ENCODE measurements at regions of chr5 and their contacts with region 1.

Region 1: GRCh38 chr5:176447982-176448608 is at the start of gene FAF2:
- DNase-seq: peak; percentile 97
- H3K4me3 ChIP-seq: peak within 1 kb of the TSS; percentile 100
- H3K27ac ChIP-seq: peak within 1 kb of the TSS; percentile 92
- H3K27me3 ChIP-seq: no peaks in the 10 kb centered on the region
- CTCF ChIP-seq: peak; percentile 90
- polyA plus RNA-seq, gene FAF2: 57.1 and 68.7 TPM in 2 replicates

Region 2: GRCh38 chr5:176361437-176362232 is 86.5 kb before region 1 on chr5 and contains the start of gene KIAA1191:
- CTCF ChIA-PET with region 1: interaction called, 13 read pairs
- POLR2A ChIA-PET with region 1: no interaction called
- DNase-seq: peak; percentile 63
- H3K4me3 ChIP-seq: peak within 1 kb of the TSS; percentile 95
- H3K27ac ChIP-seq: peak within 1 kb of the TSS; percentile 39
- H3K27me3 ChIP-seq: no peaks in the 10 kb centered on the region
- CTCF ChIP-seq: peak; percentile 30; the same call in 1 of the 2 replicates
- polyA plus RNA-seq, gene KIAA1191: 98.3 and 113 TPM in 2 replicates

Region 3: GRCh38 chr5:176415952-176416924 is 31.9 kb before region 1 on chr5 and contains the start of gene CLTB:
- CTCF ChIA-PET with region 1: interaction called, 14 read pairs
- POLR2A ChIA-PET with region 1: interaction called, 9 read pairs
- DNase-seq: no peak
- H3K4me3 ChIP-seq: peak within 1 kb of the TSS; percentile 76
- H3K27ac ChIP-seq: peak within 1 kb of the TSS; percentile 39
- H3K27me3 ChIP-seq: no peaks in the 10 kb centered on the region
- CTCF ChIP-seq: peak; percentile 43
- polyA plus RNA-seq, gene CLTB: 66.2 and 67.3 TPM in 2 replicates

Region 4: GRCh38 chr5:176436661-176437071 is 11.4 kb before region 1 on chr5:
- CTCF ChIA-PET with region 1: interaction called, 30 read pairs
- POLR2A ChIA-PET with region 1: no interaction called
- DNase-seq: no peak
- H3K4me3 ChIP-seq: no peak overlapping the region
- H3K27ac ChIP-seq: no peak overlapping the region
- H3K27me3 ChIP-seq: no peaks in the 10 kb centered on the region
- CTCF ChIP-seq: no peak

Region 5: DNA sequence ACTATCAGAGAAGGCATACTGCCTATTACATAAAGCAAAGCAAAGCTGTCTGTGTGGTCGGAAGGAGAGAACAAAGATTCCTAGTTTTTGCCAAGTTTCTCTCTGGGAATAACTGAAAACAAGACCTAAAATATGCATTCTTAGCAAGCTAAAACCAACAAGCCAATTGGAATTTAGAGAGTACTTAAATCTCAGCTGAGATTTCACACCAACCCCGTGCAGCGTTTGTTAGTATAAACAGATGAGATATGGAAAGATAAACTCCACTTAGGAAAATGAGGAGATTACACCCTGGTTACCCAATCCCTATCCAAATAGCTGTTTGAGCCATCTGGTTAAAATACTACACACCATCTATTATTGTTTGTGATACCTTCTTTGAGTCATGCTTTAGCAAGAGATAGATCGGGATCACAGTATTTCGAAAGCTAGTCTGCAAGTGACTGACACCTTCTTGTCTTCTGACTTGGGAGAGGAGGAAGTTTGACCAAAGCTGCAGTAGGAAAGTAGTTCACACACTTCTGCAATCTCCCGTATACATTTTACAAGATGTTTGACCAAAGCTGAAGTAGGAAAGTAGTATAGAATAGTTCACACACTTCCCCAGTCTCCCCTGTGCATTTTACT is 18.3 kb after region 1 on chr5:
- CTCF ChIA-PET with region 1: interaction called, 62 read pairs
- POLR2A ChIA-PET with region 1: interaction called, 5 read pairs
- DNase-seq: peak; percentile 55
- H3K4me3 ChIP-seq: no peak overlapping the region
- H3K27ac ChIP-seq: no peak overlapping the region
- H3K27me3 ChIP-seq: no peaks in the 10 kb centered on the region
- CTCF ChIP-seq: no peak

Region 6: GRCh38 chr5:176481711-176482110 is 33.6 kb after region 1 on chr5:
- CTCF ChIA-PET with region 1: interaction called, 18 read pairs
- POLR2A ChIA-PET with region 1: interaction called, 4 read pairs
- DNase-seq: no peak
- H3K4me3 ChIP-seq: no peak overlapping the region
- H3K27ac ChIP-seq: no peak overlapping the region
- H3K27me3 ChIP-seq: no peaks in the 10 kb centered on the region
- CTCF ChIP-seq: no peak

Region 7: GRCh38 chr5:176537608-176538504 is 89.8 kb after region 1 on chr5:
- CTCF ChIA-PET with region 1: interaction called, 41 read pairs
- POLR2A ChIA-PET with region 1: interaction called, 15 read pairs
- DNase-seq: peak; percentile 99
- H3K4me3 ChIP-seq: peak overlapping the region; percentile 99
- H3K27ac ChIP-seq: peak overlapping the region; percentile 94
- H3K27me3 ChIP-seq: no peaks in the 10 kb centered on the region
- CTCF ChIP-seq: no peak

Measured in AG04450 (cell line).